ENCODE measurements at regions of chr7 and their contacts with region 1.

Region 1: GRCh38 chr7:490461-491291 is 29.0 kb downstream of the PDGFA start:
- DNase-seq: peak in 2 of 10 donors; percentile 33 to 39
- H3K4me3 ChIP-seq: no peak overlapping the region
- H3K27ac ChIP-seq: no peak overlapping the region
- H3K27me3 ChIP-seq: no peaks in the 10 kb centered on the region
- CTCF ChIP-seq: no peak

Region 2: DNA sequence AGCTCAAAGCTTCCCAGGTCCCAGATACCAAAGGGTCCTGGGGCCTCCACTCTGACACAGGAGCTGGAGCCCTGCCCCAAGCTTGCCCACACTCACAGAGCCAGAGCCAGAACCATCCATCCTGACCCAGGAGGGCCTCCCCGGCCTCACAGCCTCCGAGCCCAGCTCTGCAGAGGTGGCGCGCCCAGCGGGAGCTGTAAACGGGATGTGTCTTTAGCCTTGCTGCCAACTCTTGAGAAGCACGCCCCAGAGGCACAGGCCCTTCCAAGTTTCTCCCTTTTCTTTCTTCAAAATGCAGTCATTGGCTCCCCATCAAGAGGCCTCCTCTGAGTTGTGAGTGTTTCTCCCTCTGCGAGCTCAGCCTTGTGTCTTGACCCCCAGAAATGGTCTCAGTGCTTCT is 46.1 kb before region 1 on chr7:
- intact Hi-C with region 1: loop called in 1 of 2 experiments (anchors 5 kb)
- DNase-seq: no peak
- H3K4me3 ChIP-seq: no peak overlapping the region
- H3K27ac ChIP-seq: no peak overlapping the region
- H3K27me3 ChIP-seq: no peaks in the 10 kb centered on the region
- CTCF ChIP-seq: no peak

Measured in dorsolateral prefrontal cortex (tissue), 120 donors.